ENCODE measurements at regions of chr3 and their contacts with region 1.

Region 1: DNA sequence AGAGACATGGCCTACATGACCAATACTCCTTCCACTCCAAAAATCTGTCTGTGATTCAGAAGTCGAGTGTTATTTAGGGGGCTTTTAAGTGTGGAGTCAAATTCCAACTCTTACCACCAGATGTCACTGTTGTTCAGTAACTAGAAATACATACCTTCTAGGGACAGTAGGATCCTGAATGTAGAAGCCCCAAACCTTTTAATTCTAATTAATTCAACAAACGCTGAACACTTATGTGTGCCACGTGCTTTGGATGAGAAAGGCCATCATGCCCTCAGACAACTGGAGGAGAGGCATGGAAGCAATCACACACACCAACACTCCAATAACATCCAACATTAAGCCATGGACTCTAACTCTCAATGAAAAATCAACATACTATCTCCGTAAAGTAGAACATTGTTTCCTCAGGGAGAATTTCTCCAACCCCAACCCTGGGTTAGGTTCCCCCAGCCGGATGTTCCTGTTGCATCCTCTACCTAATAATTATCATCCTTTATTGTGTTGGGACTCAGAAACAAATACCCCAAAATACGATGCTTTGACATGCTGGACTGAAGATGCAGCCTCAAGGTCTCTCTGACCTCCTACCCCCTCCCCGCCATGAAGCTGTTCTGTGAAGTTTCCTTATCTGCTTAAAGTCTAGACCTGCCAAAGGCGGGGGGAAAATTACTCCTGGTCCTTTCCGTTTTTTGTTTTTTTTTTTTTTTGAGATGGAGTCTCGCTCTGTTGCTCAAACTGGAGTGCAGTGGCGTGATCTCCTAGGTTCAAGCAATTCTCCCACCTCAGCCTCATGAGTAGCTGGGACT is 8.0 kb upstream of the CCDC13 start:
- DNase-seq: peak; percentile 32
- ATAC-seq: peak; percentile 97
- H3K4me3 Mint-ChIP-seq: no peak overlapping the region
- H3K27ac Mint-ChIP-seq: no peak overlapping the region
- H3K4me1 Mint-ChIP-seq: no peaks in the 10 kb centered on the region
- H3K27me3 Mint-ChIP-seq: no peaks in the 10 kb centered on the region
- CTCF ChIP-seq: peak; percentile 80

Region 2: GRCh38 chr3:42839616-42840015 is 58.5 kb after region 1 on chr3:
- CTCF ChIA-PET with region 1: interaction called, 16 read pairs
- POLR2A ChIA-PET with region 1: no interaction called
- intact Hi-C with region 1: no loop called
- DNase-seq: peak; percentile 47
- ATAC-seq: peak; percentile 99
- H3K4me3 Mint-ChIP-seq: no peak overlapping the region
- H3K27ac Mint-ChIP-seq: no peak overlapping the region
- H3K4me1 Mint-ChIP-seq: no peaks in the 10 kb centered on the region
- H3K27me3 Mint-ChIP-seq: no peaks in the 10 kb centered on the region
- CTCF ChIP-seq: peak; percentile 63

Region 3: GRCh38 chr3:42880601-42881451 is 99.7 kb after region 1 on chr3:
- CTCF ChIA-PET with region 1: interaction called, 10 read pairs
- POLR2A ChIA-PET with region 1: no interaction called
- intact Hi-C with region 1: loop called (anchors 5 kb)
- DNase-seq: peak; percentile 95
- ATAC-seq: peak; percentile 97
- H3K4me3 Mint-ChIP-seq: peak overlapping the region; percentile 81
- H3K27ac Mint-ChIP-seq: peak overlapping the region; percentile 90
- H3K4me1 Mint-ChIP-seq: peaks cover 14% of the 10 kb centered on the region
- H3K27me3 Mint-ChIP-seq: no peaks in the 10 kb centered on the region
- CTCF ChIP-seq: peak; percentile 86